ENCODE measurements at regions of chr12 and their contacts with region 1.

Region 1: DNA sequence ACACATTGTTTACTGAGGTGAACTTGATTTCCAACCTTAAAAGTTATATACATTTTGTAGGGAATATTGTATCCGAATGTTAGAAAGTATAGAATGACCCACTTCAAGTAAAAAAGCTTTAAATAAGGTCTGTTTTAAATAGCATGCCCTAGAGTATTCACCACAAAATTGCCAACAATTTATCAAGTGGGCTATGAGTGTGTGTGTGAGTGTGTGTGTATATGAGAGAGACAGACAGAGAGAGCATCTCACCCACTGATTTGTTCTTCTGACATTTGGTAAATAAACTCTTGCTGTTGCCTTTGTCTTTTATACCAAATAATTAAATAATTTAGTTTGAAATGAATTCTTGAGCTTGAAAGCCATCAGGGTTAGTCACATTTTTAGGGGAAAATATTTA is 29.8 kb upstream of the RAP1B start:
- DNase-seq: no peak
- ATAC-seq: no peak
- H3K4me3 ChIP-seq: no peak overlapping the region
- H3K4me3 Mint-ChIP-seq: no peak overlapping the region
- H3K27ac ChIP-seq: no peak overlapping the region
- H3K27ac Mint-ChIP-seq: no peak overlapping the region
- H3K4me1 ChIP-seq: peaks cover 11% of the 10 kb centered on the region
- H3K4me1 Mint-ChIP-seq: peaks cover 46% of the 10 kb centered on the region
- H3K27me3 ChIP-seq: no peaks in the 10 kb centered on the region
- H3K27me3 Mint-ChIP-seq: no peaks in the 10 kb centered on the region
- CTCF ChIP-seq: no peak

Region 2: DNA sequence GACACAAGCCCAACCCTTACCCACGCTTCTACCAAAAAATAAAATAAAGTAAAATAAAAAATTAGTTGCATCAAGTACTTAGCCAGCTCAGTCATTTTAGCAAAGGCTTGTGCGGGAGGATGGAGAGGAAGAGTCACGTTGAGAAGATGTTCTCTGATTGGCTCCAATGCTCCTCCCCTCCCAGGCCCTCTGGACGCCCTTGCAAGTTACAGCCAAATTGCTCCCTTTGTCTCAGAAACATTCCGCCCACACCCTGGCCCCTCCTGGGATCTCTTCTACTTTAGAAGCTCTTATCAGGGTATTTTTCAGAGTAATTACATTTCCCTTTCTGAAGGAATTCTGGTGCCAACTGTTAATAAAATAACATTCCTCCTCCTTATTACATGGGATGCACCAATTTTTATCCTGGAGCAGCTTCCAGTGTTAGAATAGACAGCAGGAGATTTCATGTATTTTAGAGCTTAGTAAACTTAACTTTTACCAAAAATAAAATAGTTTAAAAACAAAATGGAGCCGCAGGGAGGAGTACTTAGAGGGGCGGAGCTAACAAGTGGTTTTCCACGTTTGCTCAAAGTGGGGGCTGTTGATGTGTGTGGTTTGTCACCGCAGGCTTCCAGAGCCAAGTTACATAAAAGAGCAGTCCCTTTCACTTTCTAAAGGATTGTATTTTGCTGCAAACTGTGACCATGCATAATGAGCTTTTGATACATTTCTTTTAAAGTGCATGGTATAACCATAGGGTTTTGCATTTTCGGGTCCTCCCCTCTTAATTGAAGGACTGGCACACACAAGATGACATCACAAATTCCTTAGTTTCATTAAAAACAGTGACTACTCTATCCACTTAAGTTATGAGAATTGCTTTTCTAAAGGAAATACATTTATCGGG is 41.9 kb before region 1 on chr12:
- CTCF ChIA-PET with region 1: no interaction called
- POLR2A ChIA-PET with region 1: interaction called, 15 read pairs
- intact Hi-C with region 1: loop called in 1 of 2 experiments (anchors 5 kb)
- DNase-seq: peak; percentile 20 to 91 (median 42)
- ATAC-seq: peak; percentile 94
- H3K4me3 ChIP-seq: peak overlapping the region; percentile 5
- H3K4me3 Mint-ChIP-seq: peak overlapping the region; percentile 49
- H3K27ac ChIP-seq: no peak overlapping the region
- H3K27ac Mint-ChIP-seq: peak overlapping the region; percentile 80
- H3K4me1 ChIP-seq: peaks cover 16% of the 10 kb centered on the region
- H3K4me1 Mint-ChIP-seq: peaks cover 65% of the 10 kb centered on the region
- H3K27me3 ChIP-seq: no peaks in the 10 kb centered on the region
- H3K27me3 Mint-ChIP-seq: no peaks in the 10 kb centered on the region
- CTCF ChIP-seq: no peak